ENCODE measurements at regions of chr7 and their contacts with region 1.

Region 1: GRCh38 chr7:92279396-92280031 is 33.7 kb downstream of the ANKIB1 start:
- DNase-seq: no peak
- H3K4me3 ChIP-seq: no peak overlapping the region
- H3K27ac ChIP-seq: no peak overlapping the region
- H3K4me1 ChIP-seq: peaks cover 7% of the 10 kb centered on the region
- H3K27me3 ChIP-seq: no peaks in the 10 kb centered on the region
- CTCF ChIP-seq: no peak
- POLR2A ChIP-seq: no peak

Region 2: DNA sequence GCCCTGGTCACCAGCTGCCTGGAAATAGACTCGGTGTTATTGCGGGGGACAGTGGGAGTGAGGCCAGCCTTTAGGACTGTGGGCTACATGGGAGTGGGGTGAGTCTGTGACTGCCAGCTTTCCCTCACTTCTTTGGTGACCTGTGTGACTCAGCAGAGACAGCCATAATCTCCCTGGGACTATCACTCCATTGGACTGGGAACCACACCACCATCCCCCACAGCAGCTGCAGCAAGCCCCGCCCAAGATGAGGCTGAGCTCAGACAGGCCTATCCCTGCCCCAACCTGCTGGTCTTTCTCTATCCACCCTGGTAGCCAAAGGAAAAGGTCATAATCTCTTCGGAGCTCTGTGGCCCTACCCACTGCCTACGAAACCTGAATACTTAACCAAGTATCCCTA is 752.1 kb before region 1 on chr7:
- intact Hi-C with region 1: no loop called
- DNase-seq: no peak
- H3K4me3 ChIP-seq: no peak overlapping the region
- H3K27ac ChIP-seq: no peak overlapping the region
- H3K4me1 ChIP-seq: no peaks in the 10 kb centered on the region
- H3K27me3 ChIP-seq: no peaks in the 10 kb centered on the region
- CTCF ChIP-seq: no peak
- POLR2A ChIP-seq: no peak

Region 3: GRCh38 chr7:92061154-92061553 is 218.4 kb before region 1 on chr7:
- intact Hi-C with region 1: no loop called
- DNase-seq: no peak
- H3K4me3 ChIP-seq: no peak overlapping the region
- H3K27ac ChIP-seq: no peak overlapping the region
- H3K4me1 ChIP-seq: no peaks in the 10 kb centered on the region
- H3K27me3 ChIP-seq: no peaks in the 10 kb centered on the region
- CTCF ChIP-seq: no peak
- POLR2A ChIP-seq: no peak

Region 4: GRCh38 chr7:92303761-92304160 is 24.2 kb after region 1 on chr7:
- intact Hi-C with region 1: loop called (anchors 2 kb)
- DNase-seq: no peak
- H3K4me3 ChIP-seq: no peak overlapping the region
- H3K27ac ChIP-seq: no peak overlapping the region
- H3K4me1 ChIP-seq: no peaks in the 10 kb centered on the region
- H3K27me3 ChIP-seq: no peaks in the 10 kb centered on the region
- CTCF ChIP-seq: no peak
- POLR2A ChIP-seq: no peak

Region 5: GRCh38 chr7:92336662-92337340 is 57.3 kb after region 1 on chr7:
- intact Hi-C with region 1: no loop called
- DNase-seq: no peak
- H3K4me3 ChIP-seq: no peak overlapping the region
- H3K27ac ChIP-seq: no peak overlapping the region
- H3K4me1 ChIP-seq: no peaks in the 10 kb centered on the region
- H3K27me3 ChIP-seq: no peaks in the 10 kb centered on the region
- CTCF ChIP-seq: no peak
- POLR2A ChIP-seq: no peak